ENCODE measurements at regions of chr11 and their contacts with region 1.

Region 1: GRCh38 chr11:58075781-58076180 is 45.0 kb downstream of the OR6Q1 start:
- DNase-seq: peak; percentile 79
- ATAC-seq: peak; percentile 87
- H3K4me3 ChIP-seq: no peak overlapping the region
- H3K27ac ChIP-seq: no peak overlapping the region; the same call in 1 of the 2 replicates
- H3K4me1 ChIP-seq: peaks cover 6% of the 10 kb centered on the region; the same call in 1 of the 2 replicates
- H3K27me3 ChIP-seq: no peaks in the 10 kb centered on the region
- CTCF ChIP-seq: no peak
- POLR2A ChIP-seq: no peak
- RAD21 ChIP-seq: no peak

Region 2: GRCh38 chr11:56624661-56625110 is 1451.1 kb before region 1 on chr11:
- CTCF ChIA-PET with region 1: no interaction called
- POLR2A ChIA-PET with region 1: no interaction called
- dilution Hi-C with region 1: no loop called
- in situ Hi-C with region 1: no loop called
- intact Hi-C with region 1: no loop called
- DNase-seq: peak; percentile 34
- ATAC-seq: no peak
- H3K4me3 ChIP-seq: no peak overlapping the region
- H3K27ac ChIP-seq: no peak overlapping the region
- H3K4me1 ChIP-seq: no peaks in the 10 kb centered on the region
- H3K27me3 ChIP-seq: no peaks in the 10 kb centered on the region
- CTCF ChIP-seq: peak; percentile 58
- POLR2A ChIP-seq: no peak
- RAD21 ChIP-seq: peak; percentile 31

Region 3: DNA sequence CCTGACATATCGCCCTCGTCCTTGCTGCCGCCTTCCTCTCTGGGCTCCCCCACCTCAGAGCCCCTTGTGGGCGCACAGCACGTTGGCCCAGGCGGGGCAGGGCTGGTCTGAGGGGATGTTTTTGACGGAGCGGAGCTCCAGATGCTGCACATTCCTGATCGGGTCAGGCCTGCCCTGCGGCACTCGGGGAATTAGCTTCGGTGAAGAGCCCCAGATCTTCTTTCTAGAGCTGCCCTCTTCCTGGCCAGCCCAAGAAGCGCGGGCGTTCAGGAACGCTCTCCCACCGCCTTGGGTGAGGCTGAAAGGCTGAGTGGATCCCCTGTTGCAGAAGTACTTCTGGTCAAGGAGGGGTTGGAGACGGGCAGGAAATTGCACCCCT is 438.2 kb before region 1 on chr11:
- CTCF ChIA-PET with region 1: no interaction called
- POLR2A ChIA-PET with region 1: no interaction called
- dilution Hi-C with region 1: no loop called
- in situ Hi-C with region 1: no loop called
- intact Hi-C with region 1: no loop called
- DNase-seq: no peak
- ATAC-seq: peak; percentile 15
- H3K4me3 ChIP-seq: peak overlapping the region; percentile 96
- H3K27ac ChIP-seq: peak overlapping the region; percentile 80
- H3K4me1 ChIP-seq: peaks cover 13% of the 10 kb centered on the region
- H3K27me3 ChIP-seq: peaks cover 14% of the 10 kb centered on the region
- CTCF ChIP-seq: no peak
- POLR2A ChIP-seq: no peak
- RAD21 ChIP-seq: no peak

Region 4: DNA sequence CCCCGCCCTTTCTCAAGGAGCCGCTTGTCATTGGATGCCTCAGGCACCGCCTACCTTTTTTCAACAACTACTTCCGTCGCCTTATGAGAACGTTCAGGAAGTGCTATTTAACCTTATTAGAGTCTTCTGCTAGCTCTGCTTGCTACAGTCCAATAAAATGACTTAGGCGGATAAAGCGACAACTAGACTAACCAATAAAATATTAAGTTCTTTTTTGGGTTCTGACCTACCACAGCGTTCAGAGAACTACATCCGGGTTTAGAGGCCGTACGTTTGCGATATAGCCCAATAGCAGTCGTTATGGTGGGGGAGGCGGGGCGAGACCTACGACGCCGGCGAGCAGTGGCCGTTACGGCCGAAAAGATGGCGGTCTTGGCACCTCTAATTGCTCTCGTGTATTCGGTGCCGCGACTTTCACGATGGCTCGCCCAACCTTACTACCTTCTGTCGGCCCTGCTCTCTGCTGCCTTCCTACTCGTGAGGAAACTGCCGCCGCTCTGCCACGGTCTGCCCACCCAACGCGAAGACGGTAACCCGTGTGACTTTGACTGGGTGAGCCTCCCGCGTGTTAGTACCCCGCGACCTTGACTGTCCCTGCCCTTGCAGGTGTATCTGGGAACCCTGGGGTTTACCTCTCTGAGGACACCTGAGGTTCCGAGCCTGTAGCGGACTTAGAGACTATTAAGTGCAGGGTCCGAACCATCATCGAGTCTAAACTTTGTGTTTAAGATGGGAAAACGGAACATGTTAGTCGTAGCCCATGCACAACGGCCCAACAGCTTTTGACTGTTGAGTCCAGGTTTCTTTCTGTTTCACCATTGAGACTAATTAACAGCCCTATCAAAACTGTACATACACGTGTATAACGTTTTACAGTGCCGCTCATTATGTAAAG is 363.3 kb before region 1 on chr11 and contains the start of gene TMX2:
- CTCF ChIA-PET with region 1: no interaction called
- POLR2A ChIA-PET with region 1: interaction called, 10 read pairs
- dilution Hi-C with region 1: no loop called
- in situ Hi-C with region 1: no loop called
- intact Hi-C with region 1: no loop called
- DNase-seq: peak; percentile 100
- ATAC-seq: peak; percentile 95
- H3K4me3 ChIP-seq: peak within 1 kb of the TSS; percentile 74
- H3K27ac ChIP-seq: peak within 1 kb of the TSS; percentile 92
- H3K4me1 ChIP-seq: peaks cover 5% of the 10 kb centered on the region; the same call in 1 of the 2 replicates
- H3K27me3 ChIP-seq: no peaks in the 10 kb centered on the region
- CTCF ChIP-seq: no peak
- POLR2A ChIP-seq: peak; percentile 81; the same call in 1 of the 2 replicates
- RAD21 ChIP-seq: no peak
- total RNA-seq, gene TMX2: 72.5 and 103 TPM in 2 replicates

Measured in IMR-90 (cell line).